Activated CD4-positive, alpha-beta T cell treated with anti-CD3 and anti-CD28 coated beads, Interleukin-2, amount 10 ng/mL, durations not matched to agents 24 days and 14 days (primary cell): ENCODE measurements at regions of chr7 and their contacts with region 1.

Region 1: DNA sequence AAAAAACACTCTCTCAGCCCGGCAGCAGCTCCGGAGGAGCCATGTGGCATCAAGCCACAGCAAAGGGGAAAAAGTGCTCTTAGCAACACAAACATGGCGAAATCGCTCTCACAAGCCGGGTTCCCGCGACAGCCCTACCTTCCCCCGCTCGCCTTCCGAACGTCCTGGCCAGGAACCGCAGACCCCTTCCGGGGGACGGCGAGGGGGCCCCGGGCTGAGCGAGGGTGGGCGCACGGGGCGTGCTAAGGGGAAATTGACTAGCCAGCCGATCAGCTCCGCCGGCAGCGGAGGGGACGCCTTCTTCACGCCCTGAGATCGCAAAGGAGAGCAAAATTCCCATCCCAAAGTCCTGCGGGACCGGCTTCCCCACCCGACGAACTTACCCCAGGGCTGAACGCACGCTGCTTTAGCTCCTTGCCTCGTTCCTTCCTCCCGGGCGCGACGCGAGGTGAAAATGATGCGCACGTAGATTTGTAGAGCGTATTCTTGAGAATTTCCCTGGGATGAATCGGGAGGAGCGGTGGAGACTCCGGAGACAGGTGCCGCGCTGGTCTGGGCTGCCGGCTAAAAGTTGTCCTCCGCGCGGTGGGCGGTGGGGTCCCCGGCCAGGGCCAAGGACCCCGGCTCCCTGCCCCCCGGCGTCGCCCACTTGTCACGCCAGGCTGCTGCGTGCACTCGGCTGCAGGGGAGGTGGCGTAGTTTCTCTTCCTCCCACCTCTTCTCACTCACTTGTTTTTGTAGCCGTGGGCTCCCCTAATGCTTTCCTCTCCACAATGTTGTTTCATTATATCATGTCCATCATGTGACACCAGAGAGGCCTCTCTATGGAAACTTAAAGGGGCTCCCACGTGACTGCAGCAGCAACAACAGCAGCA is 220.1 kb upstream of the MKLN1 start:
- DNase-seq: peak; percentile 94
- H3K4me3 Mint-ChIP-seq: peak overlapping the region; percentile 94
- H3K27ac Mint-ChIP-seq: peak overlapping the region; percentile 99
- H3K4me1 Mint-ChIP-seq: peaks cover 65% of the 10 kb centered on the region
- H3K27me3 Mint-ChIP-seq: peaks cover 2% of the 10 kb centered on the region

Region 2: GRCh38 chr7:129952653-129953560 is 1154.7 kb before region 1 on chr7 and contains the start of gene UBE2H:
- intact Hi-C with region 1: loop called (anchors 5 kb)
- DNase-seq: peak; percentile 95
- H3K4me3 Mint-ChIP-seq: no peak within 1 kb of the TSS
- H3K27ac Mint-ChIP-seq: peak within 1 kb of the TSS; percentile 100
- H3K4me1 Mint-ChIP-seq: peaks cover 17% of the 10 kb centered on the region
- H3K27me3 Mint-ChIP-seq: peaks cover 5% of the 10 kb centered on the region
- total RNA-seq, gene UBE2H: 21.7 and 24.2 TPM in 2 replicates

Region 3: DNA sequence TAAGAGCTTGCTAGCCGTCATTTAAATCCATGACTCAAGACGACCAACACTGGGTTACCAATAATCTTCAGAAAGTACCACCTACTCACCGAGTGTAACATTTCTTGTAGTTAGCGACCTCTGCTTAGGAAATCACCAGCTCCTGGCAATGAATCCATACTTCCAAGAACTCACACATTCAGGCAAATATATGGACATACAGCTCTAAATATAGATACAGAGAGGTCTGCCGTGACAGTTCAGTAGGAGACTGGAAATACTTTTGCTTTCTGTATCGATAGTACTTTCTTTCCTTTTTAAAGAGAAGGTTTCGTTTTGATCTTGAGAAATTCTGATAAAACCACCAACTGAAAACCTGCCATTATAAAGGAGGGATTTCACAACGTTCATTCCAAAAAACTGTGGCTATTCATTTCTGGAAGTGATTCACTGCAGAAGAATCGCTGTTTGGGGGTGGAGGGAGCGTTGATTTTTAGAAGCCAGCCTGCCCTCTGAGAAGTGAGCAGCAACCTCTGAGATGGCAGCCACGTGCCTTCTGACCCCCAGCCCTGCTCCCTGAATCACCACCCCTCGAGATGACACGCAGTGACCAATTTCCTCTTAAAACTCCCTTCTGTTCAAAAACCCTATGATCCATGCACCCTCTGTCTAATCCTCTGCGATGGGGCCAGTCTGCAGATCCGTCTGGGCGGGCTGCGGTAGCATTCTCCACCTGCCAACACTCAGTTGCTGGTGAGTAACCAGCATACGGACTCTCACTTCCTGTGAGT is 194.5 kb before region 1 on chr7:
- intact Hi-C with region 1: loop called (anchors 1 kb)
- DNase-seq: peak; percentile 94
- H3K4me3 Mint-ChIP-seq: peak overlapping the region; percentile 77
- H3K27ac Mint-ChIP-seq: peak overlapping the region; percentile 91
- H3K4me1 Mint-ChIP-seq: peaks cover 81% of the 10 kb centered on the region
- H3K27me3 Mint-ChIP-seq: no peaks in the 10 kb centered on the region

Region 4: DNA sequence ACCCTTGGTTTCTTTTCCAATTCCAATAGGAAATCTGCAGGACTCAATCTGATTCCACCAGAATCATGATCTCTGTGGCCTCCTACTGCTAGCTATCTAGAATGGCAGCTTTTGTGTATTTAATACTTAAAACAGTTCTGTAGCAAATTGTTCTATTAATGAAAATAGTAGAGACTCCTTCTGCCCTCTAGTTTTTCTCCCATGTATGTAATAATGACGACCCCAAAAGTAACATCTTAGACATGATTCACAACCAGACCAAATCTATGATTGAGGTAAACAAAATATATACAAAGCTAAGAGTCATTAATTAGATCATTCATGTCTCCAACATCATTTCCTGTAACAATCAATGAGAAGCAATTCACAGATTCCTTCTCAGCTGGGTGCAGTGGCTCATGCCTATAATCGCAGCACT is 39.0 kb before region 1 on chr7:
- intact Hi-C with region 1: loop called (anchors 2 kb)
- DNase-seq: no peak
- H3K4me3 Mint-ChIP-seq: no peak overlapping the region
- H3K27ac Mint-ChIP-seq: peak overlapping the region; percentile 14
- H3K4me1 Mint-ChIP-seq: peaks cover 25% of the 10 kb centered on the region
- H3K27me3 Mint-ChIP-seq: no peaks in the 10 kb centered on the region

Region 5: GRCh38 chr7:131327626-131328376 is 220.2 kb after region 1 on chr7 and contains the start of gene MKLN1:
- intact Hi-C with region 1: loop called (anchors 1 kb)
- DNase-seq: peak; percentile 97
- H3K4me3 Mint-ChIP-seq: peak within 1 kb of the TSS; percentile 99
- H3K27ac Mint-ChIP-seq: peak within 1 kb of the TSS; percentile 97
- H3K4me1 Mint-ChIP-seq: peaks cover 45% of the 10 kb centered on the region
- H3K27me3 Mint-ChIP-seq: no peaks in the 10 kb centered on the region
- total RNA-seq, gene MKLN1: 38.3 and 38.8 TPM in 2 replicates

Region 6: GRCh38 chr7:131501422-131501821 is 393.8 kb after region 1 on chr7:
- intact Hi-C with region 1: loop called (anchors 5 kb)
- DNase-seq: peak; percentile 90
- H3K4me3 Mint-ChIP-seq: peak overlapping the region; percentile 42
- H3K27ac Mint-ChIP-seq: peak overlapping the region; percentile 68
- H3K4me1 Mint-ChIP-seq: peaks cover 34% of the 10 kb centered on the region
- H3K27me3 Mint-ChIP-seq: no peaks in the 10 kb centered on the region